Dorsolateral prefrontal cortex (tissue), 120 donors: ENCODE measurements at regions of chr7 and their contacts with region 1.

Region 1: DNA sequence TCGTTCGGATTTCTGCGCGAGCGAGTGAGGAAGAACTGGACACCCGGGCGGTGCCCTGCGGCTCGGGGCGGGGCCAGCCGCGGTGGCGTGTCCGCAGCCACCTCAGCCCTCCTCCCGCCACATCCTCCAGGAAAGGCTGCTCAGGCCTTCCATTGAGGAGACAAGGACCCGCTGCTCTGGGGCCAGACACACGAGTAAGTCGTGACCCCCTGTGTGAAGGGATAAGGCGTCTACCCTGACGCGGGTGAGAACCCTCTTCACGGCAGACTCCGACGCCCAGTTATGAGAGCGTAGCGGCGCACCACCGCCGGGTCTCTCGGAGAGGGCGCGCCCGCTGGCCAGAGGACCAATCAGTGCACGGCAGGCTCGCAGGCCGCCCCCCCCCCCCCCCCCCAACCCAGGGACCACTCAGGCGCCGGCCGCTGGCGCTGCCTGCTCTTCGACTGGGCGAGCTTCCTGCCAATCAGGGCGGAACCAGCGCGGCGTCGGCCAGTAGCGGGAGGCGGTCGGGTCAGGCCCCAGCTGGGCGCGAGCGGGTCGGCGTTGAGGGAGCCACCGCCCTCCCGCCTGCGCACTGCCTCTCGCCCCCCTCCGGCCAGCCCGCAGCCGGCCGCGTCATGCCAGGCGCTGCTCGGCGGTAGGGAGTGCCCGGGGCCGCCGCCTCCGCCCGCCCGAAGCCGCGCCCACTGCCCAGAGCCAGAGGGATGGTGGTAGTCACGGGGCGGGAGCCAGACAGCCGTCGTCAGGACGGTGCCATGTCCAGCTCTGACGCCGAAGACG is at the start of gene KCTD7:
- DNase-seq: peak; percentile 94 to 99 (median 98)
- H3K4me3 ChIP-seq: peak within 1 kb of the TSS; percentile 65 to 97 (median 84)
- H3K27ac ChIP-seq: peak within 1 kb of the TSS; percentile 81 to 100 (median 97)
- H3K27me3 ChIP-seq: no peaks in the 10 kb centered on the region
- CTCF ChIP-seq: peak in 16 of 56 donors; percentile 5 to 38 (median 16)
- total RNA-seq, gene KCTD7: 24.3 to 52.8 (median 34.0) TPM

Region 2: DNA sequence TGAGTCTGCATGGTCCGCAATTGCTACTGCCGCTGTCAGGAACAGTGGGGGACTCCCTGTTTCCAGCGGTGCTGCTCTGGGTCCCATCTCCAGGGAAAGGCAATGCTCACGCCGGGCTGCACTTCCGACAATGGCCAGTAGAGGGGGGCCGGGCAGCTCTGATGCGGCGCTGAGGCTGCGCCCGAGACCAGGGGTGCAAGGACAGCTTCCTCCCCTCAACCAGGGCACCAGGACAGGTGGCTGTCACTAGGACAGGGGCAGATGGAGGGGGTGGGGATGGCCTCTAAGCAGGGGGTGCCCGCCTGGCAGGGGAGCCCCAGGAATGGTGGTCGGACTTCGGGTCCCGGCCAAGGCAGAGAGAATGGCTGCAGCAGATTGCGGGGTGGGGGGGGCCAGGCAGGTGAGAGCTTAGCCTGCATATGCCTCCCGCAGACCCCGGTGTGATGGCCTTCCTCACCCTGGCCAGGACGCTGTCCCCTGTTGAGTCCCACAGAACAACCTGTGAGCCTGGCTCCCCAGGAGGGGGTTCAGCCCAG is 70.9 kb before region 1 on chr7:
- intact Hi-C with region 1: loop called in 1 of 2 experiments (anchors 2 kb)
- DNase-seq: peak; percentile 69 to 85 (median 74)
- H3K4me3 ChIP-seq: peak overlapping the region in 43 of 59 donors; percentile 2 to 51 (median 30)
- H3K27ac ChIP-seq: peak overlapping the region in 30 of 59 donors; percentile 13 to 81 (median 44)
- H3K27me3 ChIP-seq: no peaks in the 10 kb centered on the region
- CTCF ChIP-seq: peak; percentile 72 to 97 (median 92)

Region 3: GRCh38 chr7:66591799-66592596 is 36.6 kb before region 1 on chr7:
- intact Hi-C with region 1: loop called (anchors 5 kb)
- DNase-seq: peak; percentile 83 to 96 (median 94)
- H3K4me3 ChIP-seq: peak overlapping the region; percentile 62 to 97 (median 89)
- H3K27ac ChIP-seq: peak overlapping the region; percentile 30 to 97 (median 90)
- H3K27me3 ChIP-seq: no peaks in the 10 kb centered on the region
- CTCF ChIP-seq: peak in 7 of 56 donors; percentile 4 to 27 (median 15)

Region 4: GRCh38 chr7:66654123-66654732 is 25.7 kb after region 1 on chr7:
- intact Hi-C with region 1: loop called in 1 of 2 experiments (anchors 2 kb)
- DNase-seq: peak; percentile 98 to 99 (median 98)
- H3K4me3 ChIP-seq: peak overlapping the region; percentile 68 to 99 (median 92)
- H3K27ac ChIP-seq: peak overlapping the region; percentile 90 to 99 (median 98)
- H3K27me3 ChIP-seq: no peaks in the 10 kb centered on the region
- CTCF ChIP-seq: peak in 54 of 56 donors; percentile 3 to 76 (median 52)

Region 5: GRCh38 chr7:66681491-66682349 is 53.2 kb after region 1 on chr7:
- intact Hi-C with region 1: loop called in 1 of 2 experiments (anchors 2 kb)
- DNase-seq: peak; percentile 92 to 98 (median 96)
- H3K4me3 ChIP-seq: peak overlapping the region; percentile 71 to 99 (median 94)
- H3K27ac ChIP-seq: peak overlapping the region; percentile 43 to 99 (median 96)
- H3K27me3 ChIP-seq: no peaks in the 10 kb centered on the region
- CTCF ChIP-seq: peak in 10 of 56 donors; percentile 9 to 30 (median 14)

Region 6: GRCh38 chr7:66740302-66740979 is 111.9 kb after region 1 on chr7 and contains the start of gene RABGEF1:
- intact Hi-C with region 1: loop called in 1 of 2 experiments (anchors 10 kb)
- DNase-seq: peak; percentile 95 to 99 (median 97)
- H3K4me3 ChIP-seq: peak within 1 kb of the TSS; percentile 56 to 100 (median 95)
- H3K27ac ChIP-seq: peak within 1 kb of the TSS; percentile 68 to 99 (median 94)
- H3K27me3 ChIP-seq: no peaks in the 10 kb centered on the region
- CTCF ChIP-seq: peak in 24 of 56 donors; percentile 5 to 44 (median 21)
- total RNA-seq, gene RABGEF1: 30.2 to 59.5 (median 45.8) TPM

Region 7: DNA sequence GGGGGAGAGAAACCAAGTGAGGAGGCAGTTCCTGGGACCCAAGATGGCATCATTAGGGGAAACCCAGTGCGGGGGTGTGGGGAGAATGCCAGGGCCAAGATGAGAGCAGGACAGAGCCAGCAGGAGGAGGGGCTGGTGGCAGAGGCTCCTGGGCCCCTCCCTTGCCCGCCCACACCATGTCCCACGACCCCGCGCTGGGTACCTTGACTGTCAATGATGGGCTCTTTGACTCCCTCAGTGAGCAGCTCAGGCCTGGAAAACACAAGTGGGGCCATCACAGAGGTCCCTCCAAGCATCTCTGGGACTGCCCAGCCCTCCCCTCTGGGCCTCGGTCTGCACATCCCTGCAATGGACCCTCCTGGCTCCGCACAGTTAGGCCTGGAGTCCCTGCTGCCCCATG is 187.4 kb after region 1 on chr7:
- intact Hi-C with region 1: no loop called
- DNase-seq: peak in 1 of 10 donors; percentile 27
- H3K4me3 ChIP-seq: no peak overlapping the region
- H3K27ac ChIP-seq: no peak overlapping the region
- H3K27me3 ChIP-seq: no peaks in the 10 kb centered on the region
- CTCF ChIP-seq: no peak